ENCODE measurements at regions of chr14 and their contacts with region 1.

Region 1: GRCh38 chr14:52131640-52132320 is 62.9 kb upstream of the NID2 start:
- DNase-seq: no peak

Region 2: DNA sequence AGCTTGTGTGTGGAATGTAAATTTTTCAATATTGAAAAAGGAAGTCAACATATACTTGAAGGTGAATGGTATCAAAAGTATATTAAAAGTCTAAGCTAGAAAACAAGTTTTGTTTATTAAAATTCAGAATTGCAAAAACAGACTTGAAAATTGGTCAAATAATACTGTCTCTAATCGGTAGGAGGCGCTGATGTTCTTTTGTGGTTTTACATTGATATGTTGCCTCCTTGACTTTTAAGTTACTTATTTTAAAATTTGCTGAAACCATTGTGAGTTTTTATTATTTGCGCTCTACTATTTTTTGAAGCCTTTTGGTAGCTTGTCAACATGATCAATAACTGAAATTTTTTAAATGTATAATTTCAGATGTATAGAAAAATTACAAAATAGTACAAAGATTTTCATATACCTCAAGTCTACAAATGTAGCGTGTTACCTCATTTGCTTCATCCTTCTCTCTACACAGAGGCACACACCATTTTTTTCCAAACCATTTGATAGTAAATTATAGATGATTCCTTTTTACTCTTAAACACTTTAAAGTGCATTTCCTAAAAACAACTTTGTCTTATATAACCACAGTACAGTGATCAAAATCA is 135.5 kb before region 1 on chr14:
- intact Hi-C with region 1: loop called (anchors 5 to 10 kb)
- DNase-seq: no peak

Measured in posterior vena cava (tissue), 2 donors.